CD8-positive, alpha-beta memory T cell (primary cell): ENCODE measurements at regions of chr21 and their contacts with region 1.

Region 1: GRCh38 chr21:33324291-33325221 is at the start of gene IFNAR1:
- DNase-seq: peak; percentile 96 to 100 (median 98)
- H3K4me3 ChIP-seq: peak within 1 kb of the TSS; percentile 72
- H3K4me3 Mint-ChIP-seq: no peak within 1 kb of the TSS
- H3K27ac ChIP-seq: peak within 1 kb of the TSS; percentile 94
- H3K27ac Mint-ChIP-seq: no peak within 1 kb of the TSS
- H3K4me1 ChIP-seq: peaks cover 40% of the 10 kb centered on the region
- H3K4me1 Mint-ChIP-seq: peaks cover 8 to 32% (median 25%) of the 10 kb centered on the region in 3 donors
- H3K27me3 ChIP-seq: no peaks in the 10 kb centered on the region
- H3K27me3 Mint-ChIP-seq: no peaks in the 10 kb centered on the region
- total RNA-seq, gene IFNAR1: 31.6 to 34.1 TPM

Region 2: DNA sequence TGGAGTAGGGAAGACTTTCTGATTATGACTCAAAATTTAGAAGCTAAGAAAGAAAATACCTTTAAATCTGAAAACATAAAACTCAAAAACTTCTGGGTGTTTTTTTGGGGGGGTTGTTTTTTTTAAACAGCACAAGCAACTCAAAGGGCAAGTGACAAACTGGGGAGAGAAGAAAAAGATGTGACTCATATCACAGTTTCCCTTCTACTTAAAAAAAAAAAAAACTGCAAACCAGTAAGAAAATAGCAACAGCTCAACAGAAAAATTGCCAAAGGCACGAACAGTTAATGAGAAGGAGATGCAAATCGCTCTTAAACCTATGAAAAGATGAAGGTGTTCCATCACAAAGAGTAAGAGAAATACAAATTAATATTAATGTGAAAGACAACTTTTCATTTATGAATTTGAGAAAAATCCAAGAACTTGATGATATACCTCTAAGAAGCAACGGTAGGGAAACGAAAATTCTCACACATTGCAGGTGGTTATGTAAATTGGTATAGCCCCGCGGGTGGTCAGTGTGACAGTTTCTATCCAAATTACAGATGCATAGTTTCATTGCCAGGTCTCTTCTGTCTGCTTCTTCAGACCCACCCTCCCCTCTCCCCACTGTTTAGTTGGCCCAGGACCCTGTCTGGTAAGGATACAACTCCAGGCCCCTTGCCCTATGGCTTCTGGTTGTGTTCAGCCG is 85.8 kb before region 1 on chr21:
- CTCF ChIA-PET with region 1: interaction called, 5 read pairs
- POLR2A ChIA-PET with region 1: interaction called, 11 read pairs
- DNase-seq: peak in 1 of 5 donors; percentile 16
- H3K4me3 ChIP-seq: peak overlapping the region; percentile 21
- H3K4me3 Mint-ChIP-seq: peak overlapping the region; percentile 65 to 84 (median 66)
- H3K27ac ChIP-seq: no peak overlapping the region
- H3K27ac Mint-ChIP-seq: peak overlapping the region; percentile 71 to 97 (median 87)
- H3K4me1 ChIP-seq: peaks cover 88% of the 10 kb centered on the region
- H3K4me1 Mint-ChIP-seq: peaks cover 84 to 90% (median 88%) of the 10 kb centered on the region in 3 donors
- H3K27me3 ChIP-seq: no peaks in the 10 kb centered on the region
- H3K27me3 Mint-ChIP-seq: no peaks in the 10 kb centered on the region

Region 3: DNA sequence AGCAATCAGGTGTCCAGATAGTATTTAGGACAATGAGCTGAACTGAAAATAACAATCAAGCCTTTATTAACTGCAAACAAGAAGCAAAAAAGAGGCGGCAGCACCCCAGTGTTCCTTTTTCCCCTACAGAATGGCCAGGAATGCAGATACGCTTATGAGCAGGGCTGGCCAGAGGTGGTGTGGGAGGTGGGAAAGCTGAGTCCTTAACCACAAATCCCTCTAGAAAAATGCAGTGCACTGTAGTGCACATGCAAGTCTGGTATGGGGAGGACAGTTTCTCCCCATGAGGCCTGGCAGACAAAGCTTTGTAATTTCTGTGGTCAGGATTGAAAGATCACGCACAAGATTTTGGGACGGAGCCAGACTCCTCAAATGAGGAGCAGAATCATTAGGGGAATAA is 10.4 kb before region 1 on chr21:
- CTCF ChIA-PET with region 1: no interaction called
- POLR2A ChIA-PET with region 1: no interaction called
- DNase-seq: no peak
- H3K4me3 ChIP-seq: no peak overlapping the region
- H3K4me3 Mint-ChIP-seq: no peak overlapping the region
- H3K27ac ChIP-seq: no peak overlapping the region
- H3K27ac Mint-ChIP-seq: no peak overlapping the region
- H3K4me1 ChIP-seq: peaks cover under 1% of the 10 kb centered on the region
- H3K4me1 Mint-ChIP-seq: peaks cover 2% of the 10 kb centered on the region in 3 donors
- H3K27me3 ChIP-seq: no peaks in the 10 kb centered on the region
- H3K27me3 Mint-ChIP-seq: peaks cover 11 to 17% of the 10 kb centered on the region in 2 donors

Region 4: GRCh38 chr21:33443194-33443593 is 118.6 kb after region 1 on chr21:
- CTCF ChIA-PET with region 1: interaction called, 12 read pairs
- POLR2A ChIA-PET with region 1: no interaction called
- DNase-seq: no peak
- H3K4me3 ChIP-seq: no peak overlapping the region
- H3K4me3 Mint-ChIP-seq: no peak overlapping the region
- H3K27ac ChIP-seq: no peak overlapping the region
- H3K27ac Mint-ChIP-seq: peak overlapping the region in 1 of 8 donors; percentile 79
- H3K4me1 ChIP-seq: no peaks in the 10 kb centered on the region
- H3K4me1 Mint-ChIP-seq: peaks cover 0 to 5% (median 3%) of the 10 kb centered on the region in 3 donors
- H3K27me3 ChIP-seq: no peaks in the 10 kb centered on the region
- H3K27me3 Mint-ChIP-seq: no peaks in the 10 kb centered on the region

Region 5: GRCh38 chr21:33479679-33480480 is 155.3 kb after region 1 on chr21 and contains the start of gene TMEM50B:
- CTCF ChIA-PET with region 1: no interaction called
- POLR2A ChIA-PET with region 1: interaction called, 21 read pairs
- DNase-seq: peak; percentile 94 to 97 (median 95)
- H3K4me3 ChIP-seq: peak within 1 kb of the TSS; percentile 94
- H3K4me3 Mint-ChIP-seq: peak within 1 kb of the TSS; percentile 90 to 95 (median 94)
- H3K27ac ChIP-seq: peak within 1 kb of the TSS; percentile 89
- H3K27ac Mint-ChIP-seq: peak within 1 kb of the TSS; percentile 89 to 97 (median 93)
- H3K4me1 ChIP-seq: peaks cover 11% of the 10 kb centered on the region
- H3K4me1 Mint-ChIP-seq: peaks cover 24 to 29% (median 27%) of the 10 kb centered on the region in 3 donors
- H3K27me3 ChIP-seq: no peaks in the 10 kb centered on the region
- H3K27me3 Mint-ChIP-seq: no peaks in the 10 kb centered on the region
- total RNA-seq, gene TMEM50B: 29.2 to 29.4 TPM

Region 6: DNA sequence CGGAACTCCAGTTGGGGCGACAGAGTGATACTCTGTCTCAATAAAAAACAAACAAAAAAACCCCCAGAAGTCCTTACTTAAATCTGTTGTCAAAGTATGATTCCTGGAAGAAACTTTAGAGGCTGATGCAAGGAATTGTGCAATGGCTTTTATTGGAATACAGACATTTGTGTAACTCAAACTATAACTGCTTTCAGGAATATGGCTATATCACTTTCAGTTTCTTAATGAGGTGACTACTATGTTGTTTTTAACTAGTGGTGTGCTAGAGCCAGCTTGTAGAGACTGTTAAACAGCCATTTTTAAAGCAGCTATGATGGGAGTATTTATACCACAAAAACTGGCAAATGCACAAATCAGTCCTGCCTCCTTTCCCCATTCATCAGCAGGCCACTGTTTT is 189.7 kb after region 1 on chr21:
- CTCF ChIA-PET with region 1: no interaction called
- POLR2A ChIA-PET with region 1: no interaction called
- DNase-seq: no peak
- H3K4me3 ChIP-seq: no peak overlapping the region
- H3K4me3 Mint-ChIP-seq: no peak overlapping the region
- H3K27ac ChIP-seq: no peak overlapping the region
- H3K27ac Mint-ChIP-seq: peak overlapping the region in 1 of 8 donors; percentile 88
- H3K4me1 ChIP-seq: no peaks in the 10 kb centered on the region
- H3K4me1 Mint-ChIP-seq: no peaks in the 10 kb centered on the region
- H3K27me3 ChIP-seq: no peaks in the 10 kb centered on the region
- H3K27me3 Mint-ChIP-seq: no peaks in the 10 kb centered on the region